ENCODE measurements at regions of chr9 and their contacts with region 1.

Region 1: GRCh38 chr9:70413798-70414775 is at the start of gene KLF9:
- DNase-seq: peak; percentile 81 to 98 (median 86)
- ATAC-seq: peak; percentile 80
- H3K4me3 ChIP-seq: peak within 1 kb of the TSS; percentile 93
- H3K4me3 Mint-ChIP-seq: peak within 1 kb of the TSS; percentile 98
- H3K27ac ChIP-seq: peak within 1 kb of the TSS; percentile 97 to 99
- H3K27ac Mint-ChIP-seq: peak within 1 kb of the TSS; percentile 100
- H3K4me1 ChIP-seq: peaks cover 46% of the 10 kb centered on the region
- H3K4me1 Mint-ChIP-seq: peaks cover 60% of the 10 kb centered on the region
- H3K27me3 ChIP-seq: no peaks in the 10 kb centered on the region
- H3K27me3 Mint-ChIP-seq: no peaks in the 10 kb centered on the region
- CTCF ChIP-seq: no peak
- total RNA-seq, gene KLF9: 132 to 135 TPM

Region 2: DNA sequence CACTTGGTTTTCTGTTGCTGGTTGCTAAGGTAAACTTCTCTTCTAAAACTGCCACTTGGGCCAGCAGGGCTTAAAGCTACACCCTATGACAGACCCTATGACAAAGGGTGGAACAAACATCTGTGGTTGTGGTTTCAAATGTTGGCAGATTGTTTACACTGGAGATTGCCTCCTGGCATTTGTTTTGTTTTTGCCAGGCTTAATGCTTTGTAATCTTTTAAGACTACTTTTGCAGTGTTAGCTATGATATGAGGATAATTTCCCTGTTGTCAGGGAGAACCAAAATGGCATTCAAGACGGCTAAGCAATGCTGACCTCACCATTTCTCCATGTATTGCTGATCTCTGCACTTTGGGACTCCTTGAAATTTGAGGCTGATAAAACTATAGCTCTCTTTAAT is 320.1 kb before region 1 on chr9:
- CTCF ChIA-PET with region 1: no interaction called
- POLR2A ChIA-PET with region 1: no interaction called
- intact Hi-C with region 1: no loop called
- DNase-seq: peak in 3 of 14 experiments; percentile 10 to 34 (median 27)
- ATAC-seq: peak; percentile 48
- H3K4me3 ChIP-seq: no peak overlapping the region
- H3K4me3 Mint-ChIP-seq: no peak overlapping the region
- H3K27ac ChIP-seq: no peak overlapping the region
- H3K27ac Mint-ChIP-seq: peak overlapping the region; percentile 45
- H3K4me1 ChIP-seq: no peaks in the 10 kb centered on the region
- H3K4me1 Mint-ChIP-seq: no peaks in the 10 kb centered on the region
- H3K27me3 ChIP-seq: no peaks in the 10 kb centered on the region
- H3K27me3 Mint-ChIP-seq: peaks cover 26% of the 10 kb centered on the region
- CTCF ChIP-seq: no peak

Region 3: DNA sequence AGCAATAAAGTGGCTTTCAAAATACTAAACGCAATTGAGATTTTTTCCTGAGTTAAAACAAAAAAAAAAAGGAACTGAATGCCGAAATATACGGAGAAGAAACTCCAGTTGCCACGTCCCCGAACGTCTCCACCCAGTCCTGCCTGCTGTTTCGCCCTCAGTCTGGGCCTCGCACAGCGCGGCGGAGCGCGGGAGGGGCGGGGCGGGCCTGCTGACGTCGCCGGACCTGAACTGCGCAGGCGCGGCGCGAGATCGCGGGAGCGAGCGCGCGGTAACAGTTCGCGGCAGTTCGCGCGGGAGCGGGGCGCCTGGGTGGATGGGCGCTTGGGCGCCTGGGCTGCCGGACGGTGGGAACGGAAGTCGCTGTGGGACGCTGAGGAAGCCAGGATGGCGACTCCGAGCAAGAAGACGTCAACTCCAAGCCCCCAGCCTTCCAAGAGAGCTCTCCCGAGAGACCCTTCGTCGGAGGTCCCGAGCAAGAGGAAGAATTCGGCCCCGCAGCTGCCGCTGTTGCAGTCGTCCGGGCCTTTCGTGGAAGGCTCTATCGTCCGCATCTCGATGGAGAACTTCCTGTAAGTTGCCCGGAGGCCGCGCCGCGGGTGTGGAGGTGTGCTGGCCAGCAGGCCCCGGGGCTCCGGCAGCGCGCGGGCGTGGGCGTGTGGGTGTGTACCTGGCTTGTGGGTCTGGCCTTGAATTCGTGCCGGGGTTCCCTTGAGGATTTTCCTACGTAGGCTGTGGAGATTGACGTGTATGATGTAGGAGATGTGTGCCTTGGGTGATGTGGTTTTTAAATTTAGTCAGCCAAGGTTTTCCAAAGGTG is 155.2 kb before region 1 on chr9 and contains the start of gene SMC5:
- CTCF ChIA-PET with region 1: no interaction called
- POLR2A ChIA-PET with region 1: interaction called, 18 read pairs
- intact Hi-C with region 1: loop called (anchors 5 kb)
- DNase-seq: peak; percentile 79 to 97 (median 88)
- ATAC-seq: peak; percentile 81
- H3K4me3 ChIP-seq: peak within 1 kb of the TSS; percentile 89
- H3K4me3 Mint-ChIP-seq: peak within 1 kb of the TSS; percentile 93
- H3K27ac ChIP-seq: peak within 1 kb of the TSS; percentile 89 to 94
- H3K27ac Mint-ChIP-seq: peak within 1 kb of the TSS; percentile 96
- H3K4me1 ChIP-seq: peaks cover 44% of the 10 kb centered on the region
- H3K4me1 Mint-ChIP-seq: peaks cover 61% of the 10 kb centered on the region
- H3K27me3 ChIP-seq: no peaks in the 10 kb centered on the region
- H3K27me3 Mint-ChIP-seq: no peaks in the 10 kb centered on the region
- CTCF ChIP-seq: no peak
- total RNA-seq, gene SMC5: 37.7 to 38.1 TPM

Region 4: DNA sequence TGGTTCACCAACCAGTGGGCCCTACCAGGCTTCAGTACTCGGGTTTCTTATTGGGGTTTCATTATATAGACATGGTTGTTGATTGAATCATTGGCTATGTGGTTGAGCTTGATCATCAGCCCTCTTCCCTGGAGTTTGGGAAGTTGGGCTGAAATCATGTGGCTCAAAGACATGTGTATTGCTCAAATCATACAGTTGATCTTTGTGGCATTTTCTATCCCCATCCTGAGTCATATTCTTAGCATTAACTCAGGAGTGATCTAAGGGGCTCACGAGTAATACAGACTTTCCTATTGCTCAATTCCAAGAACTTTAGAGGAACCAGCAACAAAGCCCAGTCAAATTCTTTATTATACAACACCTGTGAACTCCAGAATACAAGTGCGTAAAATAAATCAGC is 89.1 kb before region 1 on chr9:
- CTCF ChIA-PET with region 1: no interaction called
- POLR2A ChIA-PET with region 1: no interaction called
- intact Hi-C with region 1: no loop called
- DNase-seq: no peak
- ATAC-seq: no peak
- H3K4me3 ChIP-seq: no peak overlapping the region
- H3K4me3 Mint-ChIP-seq: no peak overlapping the region
- H3K27ac ChIP-seq: no peak overlapping the region
- H3K27ac Mint-ChIP-seq: no peak overlapping the region
- H3K4me1 ChIP-seq: no peaks in the 10 kb centered on the region
- H3K4me1 Mint-ChIP-seq: no peaks in the 10 kb centered on the region
- H3K27me3 ChIP-seq: no peaks in the 10 kb centered on the region
- H3K27me3 Mint-ChIP-seq: no peaks in the 10 kb centered on the region
- CTCF ChIP-seq: no peak

Region 5: DNA sequence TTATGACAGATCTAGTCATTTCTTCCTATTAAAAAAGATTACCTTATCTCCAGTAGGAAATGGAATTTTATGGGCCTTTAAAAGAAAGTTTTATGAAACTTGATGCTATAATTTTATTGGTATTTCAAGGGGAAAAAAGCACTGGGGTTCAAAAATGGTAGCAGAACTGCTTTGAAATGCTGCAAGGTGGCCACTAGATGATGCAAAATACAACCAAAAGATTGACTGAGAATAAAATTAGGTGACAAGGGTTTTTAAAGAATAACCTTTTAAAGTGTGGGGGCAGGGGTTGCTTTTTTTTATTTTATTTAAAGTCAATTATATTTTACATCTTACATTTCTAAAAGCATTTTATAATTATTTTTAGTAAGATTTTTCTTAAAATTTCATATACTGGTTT is 61.3 kb before region 1 on chr9:
- CTCF ChIA-PET with region 1: no interaction called
- POLR2A ChIA-PET with region 1: interaction called, 4 read pairs
- intact Hi-C with region 1: loop called (anchors 5 to 10 kb)
- DNase-seq: peak in 3 of 14 experiments; percentile 43 to 52 (median 51)
- ATAC-seq: no peak
- H3K4me3 ChIP-seq: no peak overlapping the region
- H3K4me3 Mint-ChIP-seq: no peak overlapping the region
- H3K27ac ChIP-seq: no peak overlapping the region
- H3K27ac Mint-ChIP-seq: no peak overlapping the region
- H3K4me1 ChIP-seq: no peaks in the 10 kb centered on the region
- H3K4me1 Mint-ChIP-seq: no peaks in the 10 kb centered on the region
- H3K27me3 ChIP-seq: no peaks in the 10 kb centered on the region
- H3K27me3 Mint-ChIP-seq: no peaks in the 10 kb centered on the region
- CTCF ChIP-seq: peak; percentile 80

Region 6: DNA sequence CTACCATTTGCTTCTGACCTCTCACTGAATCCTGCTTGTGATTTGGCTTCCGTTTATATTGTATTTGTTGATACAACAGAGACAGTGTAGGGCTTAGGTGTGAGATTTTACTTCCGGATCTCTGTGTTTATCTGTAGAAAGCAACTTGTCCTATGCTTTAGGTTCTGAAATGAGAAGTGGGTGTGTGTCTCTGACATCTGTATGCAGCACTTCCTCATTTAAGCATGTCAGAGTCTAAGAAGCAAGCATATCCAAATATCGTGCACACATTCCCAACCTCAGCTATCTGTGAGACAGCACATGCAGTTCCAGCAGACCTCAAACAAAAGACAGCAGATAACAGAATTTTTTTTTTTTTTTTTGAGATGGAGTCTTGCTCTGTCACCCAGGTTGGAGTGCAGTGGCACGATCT is 15.9 kb before region 1 on chr9:
- CTCF ChIA-PET with region 1: interaction called, 3 read pairs
- POLR2A ChIA-PET with region 1: interaction called, 91 read pairs
- intact Hi-C with region 1: loop called (anchors 1 to 2 kb)
- DNase-seq: peak in 3 of 14 experiments; percentile 66 to 84 (median 70)
- ATAC-seq: peak; percentile 90
- H3K4me3 ChIP-seq: peak overlapping the region; percentile 7
- H3K4me3 Mint-ChIP-seq: peak overlapping the region; percentile 57
- H3K27ac ChIP-seq: peak overlapping the region; percentile 47 to 51
- H3K27ac Mint-ChIP-seq: peak overlapping the region; percentile 74
- H3K4me1 ChIP-seq: peaks cover 67% of the 10 kb centered on the region
- H3K4me1 Mint-ChIP-seq: peaks cover 75% of the 10 kb centered on the region
- H3K27me3 ChIP-seq: no peaks in the 10 kb centered on the region
- H3K27me3 Mint-ChIP-seq: no peaks in the 10 kb centered on the region
- CTCF ChIP-seq: no peak

Region 7: GRCh38 chr9:70470050-70471015 is 56.2 kb after region 1 on chr9:
- CTCF ChIA-PET with region 1: no interaction called
- POLR2A ChIA-PET with region 1: interaction called, 14 read pairs
- intact Hi-C with region 1: no loop called
- DNase-seq: no peak
- ATAC-seq: no peak
- H3K4me3 ChIP-seq: no peak overlapping the region
- H3K4me3 Mint-ChIP-seq: no peak overlapping the region
- H3K27ac ChIP-seq: no peak overlapping the region
- H3K27ac Mint-ChIP-seq: no peak overlapping the region
- H3K4me1 ChIP-seq: peaks cover 18% of the 10 kb centered on the region
- H3K4me1 Mint-ChIP-seq: peaks cover 49% of the 10 kb centered on the region
- H3K27me3 ChIP-seq: no peaks in the 10 kb centered on the region
- H3K27me3 Mint-ChIP-seq: no peaks in the 10 kb centered on the region
- CTCF ChIP-seq: no peak

Region 8: GRCh38 chr9:70563431-70564204 is 149.5 kb after region 1 on chr9:
- CTCF ChIA-PET with region 1: no interaction called
- POLR2A ChIA-PET with region 1: interaction called, 61 read pairs
- intact Hi-C with region 1: loop called in 1 of 2 experiments (anchors 2 kb)
- DNase-seq: peak; percentile 7 to 83 (median 37)
- ATAC-seq: peak; percentile 93
- H3K4me3 ChIP-seq: peak overlapping the region; percentile 23
- H3K4me3 Mint-ChIP-seq: peak overlapping the region; percentile 67
- H3K27ac ChIP-seq: peak overlapping the region; percentile 57 to 72
- H3K27ac Mint-ChIP-seq: peak overlapping the region; percentile 86
- H3K4me1 ChIP-seq: peaks cover 30% of the 10 kb centered on the region
- H3K4me1 Mint-ChIP-seq: peaks cover 52% of the 10 kb centered on the region
- H3K27me3 ChIP-seq: no peaks in the 10 kb centered on the region
- H3K27me3 Mint-ChIP-seq: no peaks in the 10 kb centered on the region
- CTCF ChIP-seq: no peak

Region 9: GRCh38 chr9:70639853-70640814 is 226.0 kb after region 1 on chr9:
- CTCF ChIA-PET with region 1: no interaction called
- POLR2A ChIA-PET with region 1: no interaction called
- intact Hi-C with region 1: no loop called
- DNase-seq: peak in 4 of 14 experiments; percentile 15 to 41 (median 32)
- ATAC-seq: no peak
- H3K4me3 ChIP-seq: no peak overlapping the region
- H3K4me3 Mint-ChIP-seq: no peak overlapping the region
- H3K27ac ChIP-seq: no peak overlapping the region
- H3K27ac Mint-ChIP-seq: no peak overlapping the region
- H3K4me1 ChIP-seq: no peaks in the 10 kb centered on the region
- H3K4me1 Mint-ChIP-seq: no peaks in the 10 kb centered on the region
- H3K27me3 ChIP-seq: peaks cover 0 to 8% of the 10 kb centered on the region in 2 experiments
- H3K27me3 Mint-ChIP-seq: peaks cover 28% of the 10 kb centered on the region
- CTCF ChIP-seq: no peak

Region 10: GRCh38 chr9:70778568-70778967 is 364.5 kb after region 1 on chr9:
- CTCF ChIA-PET with region 1: no interaction called
- POLR2A ChIA-PET with region 1: no interaction called
- intact Hi-C with region 1: no loop called
- DNase-seq: no peak
- ATAC-seq: no peak
- H3K4me3 ChIP-seq: no peak overlapping the region
- H3K4me3 Mint-ChIP-seq: no peak overlapping the region
- H3K27ac ChIP-seq: no peak overlapping the region
- H3K27ac Mint-ChIP-seq: no peak overlapping the region
- H3K4me1 ChIP-seq: no peaks in the 10 kb centered on the region
- H3K4me1 Mint-ChIP-seq: no peaks in the 10 kb centered on the region
- H3K27me3 ChIP-seq: no peaks in the 10 kb centered on the region
- H3K27me3 Mint-ChIP-seq: no peaks in the 10 kb centered on the region
- CTCF ChIP-seq: no peak

Region 11: DNA sequence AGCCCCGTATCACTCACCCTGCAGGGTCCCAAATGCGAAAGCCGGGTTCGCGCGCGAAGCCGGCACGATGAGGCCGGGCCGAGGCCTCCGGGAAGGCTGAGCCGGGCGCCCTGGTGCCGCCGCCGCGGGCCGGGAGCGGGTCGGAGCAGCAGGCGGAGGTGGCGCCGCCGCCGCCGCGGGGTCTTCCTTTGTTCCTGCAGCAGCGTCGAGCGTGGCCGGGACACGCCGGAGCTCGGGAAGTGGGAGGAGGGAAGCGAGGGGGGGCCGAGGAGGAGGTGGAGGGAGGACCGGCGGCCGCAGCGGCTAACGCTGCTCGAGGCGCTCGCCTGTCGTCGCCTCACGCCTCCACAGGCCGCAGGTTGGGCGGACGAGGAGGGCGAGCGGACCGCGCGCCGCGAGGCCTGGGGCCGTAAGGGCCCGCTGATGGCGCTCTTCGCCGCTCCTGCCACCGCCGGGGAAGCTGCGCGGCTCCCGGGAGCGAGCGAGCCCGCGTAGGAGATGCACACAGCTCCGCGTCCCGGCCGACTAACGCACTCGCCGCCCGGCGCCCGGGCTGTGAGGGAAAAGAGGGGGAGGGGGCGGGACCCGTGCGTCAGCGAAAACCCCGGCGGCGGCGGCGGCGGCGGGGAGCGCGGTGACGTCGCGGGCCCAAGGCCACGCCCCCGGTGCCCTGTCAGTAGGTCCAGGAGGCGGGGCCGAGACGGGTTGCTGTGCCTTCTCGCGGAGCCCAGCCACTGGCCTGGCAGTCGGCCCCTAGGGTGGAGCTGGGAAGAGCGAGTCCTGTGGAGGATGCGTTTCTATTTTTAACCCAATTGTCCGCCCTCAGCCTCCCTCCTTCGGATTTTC is 1950.8 kb after region 1 on chr9 and contains the start of gene ZFAND5:
- CTCF ChIA-PET with region 1: no interaction called
- POLR2A ChIA-PET with region 1: interaction called, 9 read pairs
- intact Hi-C with region 1: loop called (anchors 10 kb)
- DNase-seq: peak; percentile 87 to 99 (median 92)
- ATAC-seq: peak; percentile 77
- H3K4me3 ChIP-seq: peak within 1 kb of the TSS; percentile 90
- H3K4me3 Mint-ChIP-seq: peak within 1 kb of the TSS; percentile 99
- H3K27ac ChIP-seq: peak within 1 kb of the TSS; percentile 97 to 99
- H3K27ac Mint-ChIP-seq: peak within 1 kb of the TSS; percentile 99
- H3K4me1 ChIP-seq: peaks cover 16% of the 10 kb centered on the region
- H3K4me1 Mint-ChIP-seq: peaks cover 51% of the 10 kb centered on the region
- H3K27me3 ChIP-seq: no peaks in the 10 kb centered on the region
- H3K27me3 Mint-ChIP-seq: no peaks in the 10 kb centered on the region
- CTCF ChIP-seq: no peak
- total RNA-seq, gene ZFAND5: 368 TPM

Measured in CD4-positive, alpha-beta T cell (primary cell).